ENCODE measurements at regions of chr4 and their contacts with region 1.

Region 1: DNA sequence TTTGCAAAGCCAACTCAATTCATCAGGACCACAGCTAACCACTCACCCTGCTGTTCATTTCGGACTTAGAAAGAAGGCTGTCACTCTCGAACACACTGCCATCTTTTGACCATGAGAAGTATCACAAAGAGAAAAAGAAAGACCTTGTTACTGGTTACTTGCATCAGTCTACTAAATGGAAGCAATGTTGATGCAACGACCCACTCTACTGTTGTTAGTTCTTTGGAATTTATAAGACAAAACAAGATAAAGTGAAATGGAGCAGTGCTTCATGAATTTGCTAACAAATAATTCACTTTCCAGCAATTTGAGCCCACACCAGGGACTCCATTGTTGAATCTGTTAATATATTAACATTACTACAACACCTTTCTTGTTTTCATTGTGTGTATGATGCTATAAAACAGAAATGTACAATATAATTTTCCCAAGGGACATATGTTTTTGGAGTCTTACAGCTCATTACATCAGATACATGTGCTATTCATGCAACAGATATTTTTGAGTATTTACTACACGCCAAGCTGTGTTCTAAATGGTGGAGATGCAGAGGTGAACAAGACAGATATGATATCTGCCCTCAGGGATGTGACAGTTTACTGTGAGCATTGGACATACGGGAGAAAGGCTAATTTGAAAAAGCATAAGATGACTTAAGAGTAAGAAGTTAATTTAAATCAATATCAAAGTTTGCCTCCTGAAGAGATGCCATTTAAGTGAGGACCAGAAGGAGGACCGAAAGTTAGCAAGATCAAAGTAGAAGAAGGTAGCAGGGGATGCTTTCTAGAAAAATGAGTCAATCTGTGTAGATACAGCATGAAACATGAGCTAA is 87.2 kb downstream of the AREG start:
- DNase-seq: no peak
- H3K4me3 Mint-ChIP-seq: no peak overlapping the region
- H3K27ac Mint-ChIP-seq: no peak overlapping the region
- H3K4me1 Mint-ChIP-seq: no peaks in the 10 kb centered on the region
- H3K27me3 Mint-ChIP-seq: peaks cover 8% of the 10 kb centered on the region

Region 2: GRCh38 chr4:74320559-74321118 is 211.5 kb before region 1 on chr4:
- CTCF ChIA-PET with region 1: interaction called, 8 read pairs
- POLR2A ChIA-PET with region 1: no interaction called
- intact Hi-C with region 1: loop called (anchors 2 kb)
- DNase-seq: peak; percentile 48
- H3K4me3 Mint-ChIP-seq: no peak overlapping the region
- H3K27ac Mint-ChIP-seq: no peak overlapping the region
- H3K4me1 Mint-ChIP-seq: no peaks in the 10 kb centered on the region
- H3K27me3 Mint-ChIP-seq: peaks cover 14% of the 10 kb centered on the region

Region 3: GRCh38 chr4:74335341-74336021 is 196.7 kb before region 1 on chr4:
- CTCF ChIA-PET with region 1: no interaction called
- POLR2A ChIA-PET with region 1: no interaction called
- intact Hi-C with region 1: no loop called
- DNase-seq: no peak
- H3K4me3 Mint-ChIP-seq: no peak overlapping the region
- H3K27ac Mint-ChIP-seq: no peak overlapping the region
- H3K4me1 Mint-ChIP-seq: no peaks in the 10 kb centered on the region
- H3K27me3 Mint-ChIP-seq: peaks cover 3% of the 10 kb centered on the region

Region 4: GRCh38 chr4:74376888-74377483 is 155.2 kb before region 1 on chr4:
- CTCF ChIA-PET with region 1: interaction called, 30 read pairs
- POLR2A ChIA-PET with region 1: no interaction called
- intact Hi-C with region 1: loop called (anchors 1 kb)
- DNase-seq: no peak
- H3K4me3 Mint-ChIP-seq: no peak overlapping the region
- H3K27ac Mint-ChIP-seq: no peak overlapping the region
- H3K4me1 Mint-ChIP-seq: peaks cover 3% of the 10 kb centered on the region
- H3K27me3 Mint-ChIP-seq: peaks cover 5% of the 10 kb centered on the region

Region 5: GRCh38 chr4:74543231-74543670 is 11.1 kb after region 1 on chr4:
- CTCF ChIA-PET with region 1: interaction called, 12 read pairs
- POLR2A ChIA-PET with region 1: no interaction called
- intact Hi-C with region 1: no loop called
- DNase-seq: no peak
- H3K4me3 Mint-ChIP-seq: no peak overlapping the region
- H3K27ac Mint-ChIP-seq: no peak overlapping the region
- H3K4me1 Mint-ChIP-seq: peaks cover 9% of the 10 kb centered on the region
- H3K27me3 Mint-ChIP-seq: no peaks in the 10 kb centered on the region

Region 6: DNA sequence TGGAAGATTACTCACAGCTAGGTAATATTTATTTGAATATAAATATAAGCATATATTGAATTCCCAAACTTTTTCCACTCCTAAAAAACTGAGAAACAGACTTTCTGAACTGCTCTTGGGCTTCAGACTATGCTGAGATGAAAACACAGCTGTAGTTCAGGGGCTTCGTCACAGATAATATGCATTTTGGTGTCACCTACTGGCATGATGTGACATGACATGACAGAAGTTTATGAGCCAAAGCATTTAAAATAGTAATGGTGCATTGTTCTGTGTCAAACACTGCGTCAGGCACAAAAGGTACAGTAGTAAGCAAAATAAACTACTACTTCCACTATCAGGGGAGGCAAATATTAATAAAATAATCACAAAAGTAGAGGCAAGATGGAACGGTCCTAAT is 90.9 kb after region 1 on chr4:
- CTCF ChIA-PET with region 1: interaction called, 5 read pairs
- POLR2A ChIA-PET with region 1: no interaction called
- intact Hi-C with region 1: loop called (anchors 10 kb)
- DNase-seq: no peak
- H3K4me3 Mint-ChIP-seq: no peak overlapping the region
- H3K27ac Mint-ChIP-seq: no peak overlapping the region
- H3K4me1 Mint-ChIP-seq: peaks cover 17% of the 10 kb centered on the region
- H3K27me3 Mint-ChIP-seq: no peaks in the 10 kb centered on the region

Region 7: DNA sequence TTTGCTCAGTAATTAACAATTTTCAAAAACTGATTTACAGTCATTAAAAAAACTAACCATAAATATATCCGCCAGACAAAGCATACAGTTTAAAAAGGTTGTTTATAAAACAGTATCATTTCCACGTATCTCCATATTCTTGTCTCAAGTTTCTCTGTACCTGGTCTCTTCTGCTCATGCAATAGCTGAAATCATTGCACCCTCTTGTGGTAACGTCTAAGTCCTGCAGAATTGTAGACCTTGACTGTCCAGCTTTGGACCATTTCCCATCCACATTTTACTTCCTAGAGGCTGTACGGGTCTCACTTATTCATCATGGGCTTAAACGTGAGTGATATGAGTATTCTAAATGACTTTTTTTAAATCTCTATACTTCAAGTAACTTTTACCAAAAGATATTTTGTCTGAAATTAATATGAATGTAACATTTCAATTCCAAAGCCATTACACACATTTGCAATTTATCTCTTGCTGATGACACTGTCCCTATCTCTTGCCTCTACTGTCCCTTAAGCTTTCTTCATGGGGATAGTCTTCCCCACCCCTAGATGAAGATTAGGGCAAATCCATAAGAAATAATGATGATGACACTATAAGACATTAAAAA is 143.6 kb after region 1 on chr4:
- CTCF ChIA-PET with region 1: interaction called, 3 read pairs
- POLR2A ChIA-PET with region 1: no interaction called
- intact Hi-C with region 1: loop called (anchors 5 kb)
- DNase-seq: no peak
- H3K4me3 Mint-ChIP-seq: no peak overlapping the region
- H3K27ac Mint-ChIP-seq: no peak overlapping the region
- H3K4me1 Mint-ChIP-seq: no peaks in the 10 kb centered on the region
- H3K27me3 Mint-ChIP-seq: peaks cover 3% of the 10 kb centered on the region

Measured in activated CD4-positive, alpha-beta memory T cell treated with anti-CD3 and anti-CD28 coated beads for 36 hours (primary cell).